ENCODE measurements at regions of chr6 and their contacts with region 1.

Region 1: DNA sequence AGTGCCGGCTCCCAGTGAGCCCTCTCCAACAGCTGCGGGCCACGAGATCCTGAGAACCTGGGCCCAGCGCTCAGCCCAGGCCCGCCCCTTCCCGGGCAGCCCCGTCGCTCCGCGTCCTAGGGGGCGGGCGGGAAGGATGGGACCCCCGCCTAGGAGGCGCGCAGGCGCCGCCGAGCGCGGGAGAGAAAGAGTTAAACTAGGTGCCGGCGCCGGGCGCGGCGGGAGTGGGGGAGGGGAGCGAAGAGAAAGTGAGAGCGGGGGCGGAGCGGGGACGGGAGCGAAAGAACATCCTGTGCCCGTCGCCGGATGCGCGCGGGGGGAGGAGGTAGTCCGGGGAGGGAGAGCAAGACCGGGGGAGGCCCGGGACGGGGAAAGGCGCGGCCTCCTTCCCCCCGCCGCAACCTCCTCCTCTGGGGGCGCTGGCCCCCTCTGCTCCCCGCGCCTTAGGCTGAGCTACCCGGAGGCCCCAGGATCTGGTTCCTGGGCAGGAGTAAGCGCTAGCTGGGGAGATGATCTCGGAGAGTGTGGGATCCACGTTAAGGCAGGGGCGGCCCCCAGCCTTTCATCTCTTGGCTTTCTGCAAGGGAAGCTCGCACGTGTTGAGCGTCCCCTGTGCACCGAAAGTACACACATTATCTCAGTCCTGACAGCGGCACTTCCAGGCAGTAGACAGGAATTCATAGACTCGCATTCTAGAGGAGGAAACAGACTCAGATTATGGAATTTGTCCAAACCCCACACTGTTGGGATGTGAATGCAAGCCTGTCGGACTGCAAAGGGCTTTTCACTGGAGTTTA is 4.9 kb upstream of the ARMC12 start:
- DNase-seq: peak; percentile 97
- ATAC-seq: peak; percentile 66 to 71

Region 2: GRCh38 chr6:35522660-35523658 is 209.0 kb before region 1 on chr6:
- intact Hi-C with region 1: loop called (anchors 2 kb)
- DNase-seq: peak; percentile 78
- ATAC-seq: peak; percentile 87 to 94

Region 3: GRCh38 chr6:35601331-35602132 is 130.4 kb before region 1 on chr6:
- intact Hi-C with region 1: loop called in 1 of 2 experiments (anchors 5 kb)
- DNase-seq: peak; percentile 58
- ATAC-seq: peak; percentile 79 to 88